GM12878 (cell line): ENCODE measurements at regions of chr9 and their contacts with region 1.

Region 1: DNA sequence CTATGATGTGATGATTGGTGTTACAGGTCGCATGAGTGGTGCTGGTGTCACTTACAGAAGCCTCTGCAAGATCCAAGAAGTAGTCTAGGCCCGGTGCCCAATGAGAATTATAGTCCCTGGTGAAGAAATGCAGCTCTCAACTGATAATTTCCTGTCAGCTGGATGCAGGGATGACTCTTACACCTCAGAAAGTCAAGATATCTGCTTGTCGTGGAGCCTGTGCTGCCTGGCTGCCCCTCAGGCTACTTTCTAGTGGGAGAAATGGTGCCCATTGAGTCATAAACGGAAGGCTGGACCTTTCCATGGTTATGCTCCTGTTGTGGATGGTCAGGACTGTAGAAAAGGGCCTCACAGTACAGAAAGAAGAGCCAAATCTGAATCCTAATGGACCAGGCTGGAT is 46.8 kb upstream of the NXNL2 start:
- DNase-seq: no peak
- ATAC-seq: no peak
- H3K4me3 ChIP-seq: no peak overlapping the region
- H3K27ac ChIP-seq: no peak overlapping the region
- H3K4me1 ChIP-seq: no peaks in the 10 kb centered on the region
- H3K27me3 ChIP-seq: no peaks in the 10 kb centered on the region
- CTCF ChIP-seq: no peak
- EP300 ChIP-seq: no peak
- POLR2A ChIP-seq: no peak
- RAD21 ChIP-seq: no peak

Region 2: DNA sequence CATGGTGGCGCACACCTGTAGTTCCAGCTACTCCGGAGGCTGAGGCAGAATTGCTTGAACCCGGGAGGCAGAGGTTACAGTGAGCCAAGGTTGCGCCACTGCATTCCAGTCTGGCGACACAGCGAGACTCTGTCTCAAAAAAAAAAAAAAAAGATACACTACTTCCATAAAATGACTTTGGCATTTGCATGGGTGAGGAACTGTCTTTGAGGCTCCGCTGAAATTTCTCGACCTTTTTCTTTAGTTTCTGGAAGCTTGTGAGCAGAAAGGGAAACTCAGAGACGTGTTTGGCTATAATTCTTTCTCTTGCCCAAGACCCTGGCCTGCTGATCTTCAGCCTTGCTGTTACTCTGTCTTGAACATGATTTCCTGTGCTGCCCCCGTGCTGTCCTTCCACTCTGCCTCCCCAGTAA is 62.6 kb before region 1 on chr9:
- CTCF ChIA-PET with region 1: no interaction called
- POLR2A ChIA-PET with region 1: no interaction called
- RAD21 ChIA-PET with region 1: no interaction called
- SMC1A ChIA-PET with region 1: no interaction called
- in situ Hi-C with region 1: no loop called
- intact Hi-C with region 1: no loop called
- DNase-seq: no peak
- ATAC-seq: no peak
- H3K4me3 ChIP-seq: no peak overlapping the region
- H3K27ac ChIP-seq: no peak overlapping the region
- H3K4me1 ChIP-seq: no peaks in the 10 kb centered on the region
- H3K27me3 ChIP-seq: no peaks in the 10 kb centered on the region
- CTCF ChIP-seq: no peak
- EP300 ChIP-seq: no peak
- POLR2A ChIP-seq: no peak
- RAD21 ChIP-seq: no peak

Region 3: GRCh38 chr9:88476491-88477271 is 11.5 kb before region 1 on chr9:
- CTCF ChIA-PET with region 1: no interaction called
- POLR2A ChIA-PET with region 1: interaction called, 3 read pairs
- RAD21 ChIA-PET with region 1: no interaction called
- SMC1A ChIA-PET with region 1: interaction called, 11 read pairs
- in situ Hi-C with region 1: no loop called
- intact Hi-C with region 1: no loop called
- DNase-seq: peak; percentile 3
- ATAC-seq: peak; percentile 78
- H3K4me3 ChIP-seq: no peak overlapping the region
- H3K27ac ChIP-seq: no peak overlapping the region
- H3K4me1 ChIP-seq: peaks cover 4% of the 10 kb centered on the region; the same call in 1 of the 2 replicates
- H3K27me3 ChIP-seq: no peaks in the 10 kb centered on the region
- CTCF ChIP-seq: no peak
- EP300 ChIP-seq: no peak; a peak in 1 of 4 replicates
- POLR2A ChIP-seq: no peak
- RAD21 ChIP-seq: no peak